Common myeloid progenitor, CD34-positive (primary cell): ENCODE measurements at regions of chr3 and their contacts with region 1.

Region 1: DNA sequence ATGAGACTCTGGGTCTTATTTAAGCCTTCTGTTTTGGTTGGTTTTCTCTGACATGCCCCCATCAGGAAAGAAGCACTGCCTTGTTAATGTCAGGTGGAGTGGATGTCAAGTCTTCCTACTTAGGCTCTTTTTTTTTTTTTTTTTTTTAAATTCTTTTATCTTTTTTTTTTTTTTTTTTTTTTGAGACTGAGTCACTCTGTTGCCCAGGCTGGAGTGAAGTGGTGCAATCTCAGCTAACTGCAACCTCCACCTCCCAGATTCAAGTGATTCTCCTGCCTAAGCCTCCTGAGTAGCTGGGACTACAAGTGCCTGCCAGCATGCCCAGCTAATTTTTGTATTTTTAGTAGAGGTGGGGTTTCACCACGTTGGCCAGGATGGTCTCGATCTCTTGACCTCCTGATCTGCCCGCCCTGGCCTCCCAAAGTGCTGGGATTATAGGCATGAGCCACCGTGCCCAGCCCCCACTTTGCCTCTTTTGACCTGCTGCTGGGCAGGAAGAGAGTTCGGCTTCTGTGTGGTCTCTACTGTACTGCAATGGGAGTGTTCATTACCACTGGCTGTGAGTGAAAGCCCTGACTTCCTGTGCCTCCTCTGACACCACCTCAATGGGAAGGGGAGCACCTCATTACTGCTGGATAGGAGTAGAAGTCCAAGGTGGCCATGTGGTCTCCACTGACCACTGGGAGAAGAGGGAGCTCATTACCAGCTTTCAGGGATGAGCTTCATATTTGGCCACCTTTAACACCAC is 10.9 kb downstream of the CTDSPL start:
- DNase-seq: no peak
- H3K4me3 ChIP-seq: no peak overlapping the region
- H3K27ac ChIP-seq: no peak overlapping the region
- H3K4me1 ChIP-seq: no peaks in the 10 kb centered on the region
- H3K27me3 ChIP-seq: no peaks in the 10 kb centered on the region

Region 2: GRCh38 chr3:37887062-37887461 is 14.5 kb after region 1 on chr3:
- CTCF ChIA-PET with region 1: interaction called, 19 read pairs
- POLR2A ChIA-PET with region 1: no interaction called
- DNase-seq: no peak
- H3K4me3 ChIP-seq: no peak overlapping the region
- H3K27ac ChIP-seq: no peak overlapping the region
- H3K4me1 ChIP-seq: peaks cover 25 to 56% (median 34%) of the 10 kb centered on the region in 4 experiments
- H3K27me3 ChIP-seq: no peaks in the 10 kb centered on the region